ENCODE measurements at regions of chr3 and their contacts with region 1.

Region 1: GRCh38 chr3:184561061-184561912 is at the start of gene EPHB3:
- DNase-seq: peak; percentile 99 to 100
- H3K4me3 ChIP-seq: peak within 1 kb of the TSS; percentile 60
- H3K27ac ChIP-seq: no peak within 1 kb of the TSS
- H3K4me1 ChIP-seq: peaks cover 46% of the 10 kb centered on the region
- H3K27me3 ChIP-seq: peaks cover 28% of the 10 kb centered on the region
- CTCF ChIP-seq: peak; percentile 100
- total RNA-seq, gene EPHB3: 12.0 and 15.7 TPM in 2 replicates

Region 2: GRCh38 chr3:184602416-184603150 is 41.3 kb after region 1 on chr3:
- CTCF ChIA-PET with region 1: interaction called, 4 read pairs
- POLR2A ChIA-PET with region 1: no interaction called
- intact Hi-C with region 1: loop called (anchors 2 kb)
- DNase-seq: peak; percentile 51 to 52
- H3K4me3 ChIP-seq: no peak overlapping the region
- H3K27ac ChIP-seq: no peak overlapping the region
- H3K4me1 ChIP-seq: peaks cover 17% of the 10 kb centered on the region
- H3K27me3 ChIP-seq: peaks cover 27% of the 10 kb centered on the region; the same call in 1 of the 2 replicates
- CTCF ChIP-seq: no peak

Region 3: DNA sequence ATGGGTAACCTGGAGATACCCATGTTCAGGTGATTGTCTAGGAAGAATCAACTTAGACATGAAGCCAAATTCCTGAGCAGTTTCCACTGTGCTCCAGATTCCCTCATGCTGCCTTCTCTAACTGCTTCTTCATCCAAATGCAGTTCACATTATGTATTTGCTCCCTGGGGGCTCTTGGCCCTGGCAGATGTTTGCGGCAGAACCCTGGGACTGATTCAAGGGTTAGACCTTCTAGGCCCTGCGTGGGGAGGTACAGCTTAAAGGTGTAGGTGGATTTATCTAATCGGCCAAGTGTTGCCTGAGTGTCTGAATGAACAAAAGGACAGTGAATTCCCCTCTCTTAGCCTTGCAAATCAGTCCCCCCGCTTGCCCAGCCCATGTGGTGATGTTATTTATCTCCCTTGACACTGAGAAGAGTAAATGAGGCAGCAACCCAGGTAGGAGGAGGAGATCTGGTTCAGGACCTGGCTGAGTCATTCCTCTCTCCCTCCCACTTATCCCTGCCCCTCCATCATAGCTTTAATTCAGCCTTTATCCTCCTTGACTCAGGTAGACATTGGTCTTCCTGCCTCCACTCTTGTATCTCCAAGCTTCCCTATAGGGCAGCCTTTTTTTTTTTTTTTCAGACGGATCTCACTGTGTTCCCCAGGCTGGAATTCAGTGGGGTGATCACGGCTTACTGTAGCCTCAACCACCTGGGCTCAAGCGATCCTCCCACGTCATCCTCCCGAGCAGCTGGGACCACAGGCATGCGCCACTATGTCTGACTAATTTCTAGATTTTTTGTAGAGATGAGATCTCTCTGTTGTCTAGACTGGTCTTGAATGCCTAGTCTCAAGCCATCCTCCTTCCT is 95.8 kb after region 1 on chr3:
- CTCF ChIA-PET with region 1: interaction called, 5 read pairs
- POLR2A ChIA-PET with region 1: interaction called, 21 read pairs
- intact Hi-C with region 1: loop called (anchors 1 kb)
- DNase-seq: peak in 1 of 2 experiments; percentile 78
- H3K4me3 ChIP-seq: no peak overlapping the region
- H3K27ac ChIP-seq: no peak overlapping the region
- H3K4me1 ChIP-seq: peaks cover 38% of the 10 kb centered on the region
- H3K27me3 ChIP-seq: no peaks in the 10 kb centered on the region
- CTCF ChIP-seq: no peak

Region 4: DNA sequence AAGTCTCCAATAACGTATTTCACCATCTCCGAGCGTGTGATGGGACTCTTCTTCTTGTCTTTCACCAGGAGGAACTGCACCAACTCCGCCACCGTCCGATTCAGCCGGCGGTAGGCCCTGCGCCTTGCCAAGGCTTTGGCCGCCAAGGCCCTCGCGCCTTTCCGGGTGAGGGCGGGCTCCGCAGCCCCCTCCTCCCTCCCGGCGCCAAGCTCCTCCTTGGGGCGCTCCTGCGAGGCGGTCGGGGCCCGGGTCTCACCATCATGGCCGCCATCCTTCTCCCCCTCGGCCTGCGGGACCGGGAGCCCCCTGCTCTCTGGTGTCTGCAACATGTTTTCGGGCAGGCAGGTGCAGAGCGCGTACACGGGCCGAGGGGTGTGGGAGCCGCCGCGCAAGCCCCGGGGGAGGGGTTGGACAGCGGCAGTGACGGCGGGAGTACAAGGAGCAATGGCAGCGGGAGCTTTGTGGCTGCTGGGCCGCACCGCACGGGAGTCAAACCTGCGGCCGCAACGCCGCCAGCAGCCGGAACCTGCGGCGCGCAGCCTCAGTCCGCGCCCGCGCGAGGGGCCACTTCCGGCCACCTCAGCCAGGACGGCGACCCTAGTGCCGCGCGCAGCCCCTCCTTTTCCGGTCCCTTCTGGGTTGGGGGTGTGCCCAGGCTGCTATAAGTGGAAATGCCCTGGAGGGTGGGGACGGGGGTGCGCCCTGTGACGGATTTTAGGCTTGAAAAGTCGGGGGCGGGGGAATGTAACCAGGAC is 150.4 kb after region 1 on chr3 and contains the start of gene MAGEF1:
- CTCF ChIA-PET with region 1: interaction called, 4 read pairs
- POLR2A ChIA-PET with region 1: interaction called, 8 read pairs
- intact Hi-C with region 1: loop called (anchors 1 kb)
- DNase-seq: peak; percentile 81 to 96
- H3K4me3 ChIP-seq: peak within 1 kb of the TSS; percentile 91
- H3K27ac ChIP-seq: peak within 1 kb of the TSS; percentile 79
- H3K4me1 ChIP-seq: peaks cover 21% of the 10 kb centered on the region
- H3K27me3 ChIP-seq: no peaks in the 10 kb centered on the region
- CTCF ChIP-seq: no peak
- total RNA-seq, gene MAGEF1: 97.2 and 106 TPM in 2 replicates

Region 5: DNA sequence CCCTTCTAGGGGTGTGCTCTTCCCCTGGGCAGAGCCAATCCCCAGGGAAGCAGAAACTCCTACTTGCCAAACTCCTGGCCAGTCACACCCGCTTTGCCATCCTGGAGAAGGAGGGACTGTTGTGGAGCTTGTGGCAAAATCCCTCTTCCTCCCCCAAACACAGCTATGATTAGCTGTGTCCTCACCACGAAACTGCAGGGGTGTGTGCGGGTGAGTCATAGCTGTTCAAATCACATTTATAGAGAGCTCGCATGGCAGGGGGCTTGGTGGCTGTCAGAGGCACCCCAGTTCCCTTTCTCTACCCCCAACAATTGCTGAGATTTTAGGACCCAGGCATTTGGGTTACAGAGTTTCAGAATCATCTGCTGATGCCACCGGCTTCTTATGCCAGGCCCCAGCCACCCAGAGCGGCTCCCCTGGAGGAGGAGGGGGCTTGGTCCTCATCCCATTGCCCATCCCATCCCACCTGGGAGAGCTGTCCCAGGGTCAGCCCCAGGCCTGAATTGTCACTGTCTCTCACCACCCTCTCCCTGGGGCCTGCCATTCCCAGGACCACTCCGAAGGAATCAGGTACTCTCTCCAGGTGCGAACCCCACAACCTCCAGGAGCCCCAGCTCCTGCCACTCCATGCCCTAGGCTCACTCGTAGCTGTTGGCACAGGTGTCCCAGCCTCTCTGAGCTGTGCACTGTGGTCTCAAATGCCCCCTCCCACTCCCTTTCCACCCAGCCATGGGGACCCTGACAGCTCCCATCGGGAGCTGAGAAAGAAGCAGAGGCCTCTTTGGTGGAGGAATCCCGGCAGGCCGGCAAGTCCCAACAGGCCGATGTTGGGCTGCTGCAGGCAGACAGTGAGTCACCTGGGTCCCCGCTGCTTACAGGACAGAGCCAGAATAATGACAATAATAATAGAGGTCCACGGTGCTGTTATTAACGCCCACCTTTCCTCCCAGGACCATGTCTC is 179.5 kb after region 1 on chr3:
- CTCF ChIA-PET with region 1: interaction called, 22 read pairs
- POLR2A ChIA-PET with region 1: interaction called, 3 read pairs
- intact Hi-C with region 1: loop called (anchors 1 kb)
- DNase-seq: peak; percentile 57 to 74
- H3K4me3 ChIP-seq: no peak overlapping the region
- H3K27ac ChIP-seq: no peak overlapping the region
- H3K4me1 ChIP-seq: peaks cover 43% of the 10 kb centered on the region
- H3K27me3 ChIP-seq: no peaks in the 10 kb centered on the region
- CTCF ChIP-seq: no peak

Region 6: DNA sequence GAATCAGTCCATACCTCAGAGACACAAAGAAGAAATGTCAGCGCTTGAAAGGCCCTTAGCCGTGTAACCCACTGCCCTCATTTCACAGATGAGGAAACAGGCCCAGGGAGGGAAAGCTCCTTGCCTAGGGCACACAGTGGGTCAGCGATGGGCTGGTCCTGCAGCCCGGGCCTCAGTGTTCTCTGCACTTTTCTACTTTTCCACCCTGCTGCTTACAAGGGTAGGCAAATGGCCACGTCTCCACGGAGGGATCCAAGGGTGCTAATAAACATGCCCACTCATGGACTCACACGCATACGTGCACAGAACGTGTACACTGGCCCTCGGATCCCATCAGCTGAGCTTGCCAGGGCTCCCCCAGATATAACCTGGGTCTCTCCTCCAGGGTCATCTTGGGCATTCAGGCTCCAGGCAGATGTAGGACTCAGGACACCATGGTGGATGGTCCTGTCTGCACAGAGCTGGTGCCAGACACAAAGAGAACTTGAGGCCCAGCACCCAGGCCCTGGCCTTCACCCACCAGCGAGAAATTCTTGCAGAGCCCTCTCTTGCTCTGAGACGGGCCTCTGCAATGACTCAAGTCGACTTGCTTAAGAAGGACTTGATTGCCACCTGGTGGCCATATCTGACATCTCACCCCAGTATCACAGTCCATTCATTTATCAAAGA is 216.2 kb after region 1 on chr3:
- CTCF ChIA-PET with region 1: interaction called, 6 read pairs
- POLR2A ChIA-PET with region 1: no interaction called
- intact Hi-C with region 1: loop called (anchors 1 kb)
- DNase-seq: peak; percentile 88 to 92
- H3K4me3 ChIP-seq: no peak overlapping the region
- H3K27ac ChIP-seq: no peak overlapping the region
- H3K4me1 ChIP-seq: no peaks in the 10 kb centered on the region
- H3K27me3 ChIP-seq: peaks cover 18% of the 10 kb centered on the region
- CTCF ChIP-seq: peak; percentile 98

Region 7: GRCh38 chr3:184808021-184808420 is 246.7 kb after region 1 on chr3:
- CTCF ChIA-PET with region 1: interaction called, 5 read pairs
- POLR2A ChIA-PET with region 1: no interaction called
- intact Hi-C with region 1: loop called (anchors 1 kb)
- DNase-seq: no peak
- H3K4me3 ChIP-seq: no peak overlapping the region
- H3K27ac ChIP-seq: no peak overlapping the region
- H3K4me1 ChIP-seq: peaks cover 16% of the 10 kb centered on the region
- H3K27me3 ChIP-seq: no peaks in the 10 kb centered on the region
- CTCF ChIP-seq: 0 out of 2 replicates have a peak, but pooled peaks have one; percentile 23